Activated naive CD8-positive, alpha-beta T cell treated with anti-CD3 and anti-CD28 coated beads, Interleukin-2, amount 10 ng/mL, durations not matched to agents 7 days and 5 days (primary cell): ENCODE measurements at regions of chr2 and their contacts with region 1.

Region 1: GRCh38 chr2:101328474-101329007 is 20.0 kb upstream of the RNF149 start:
- DNase-seq: no peak
- ATAC-seq: peak; percentile 93
- H3K4me3 Mint-ChIP-seq: no peak overlapping the region
- H3K27ac Mint-ChIP-seq: no peak overlapping the region
- H3K4me1 Mint-ChIP-seq: peaks cover 21% of the 10 kb centered on the region
- H3K27me3 Mint-ChIP-seq: no peaks in the 10 kb centered on the region

Region 2: DNA sequence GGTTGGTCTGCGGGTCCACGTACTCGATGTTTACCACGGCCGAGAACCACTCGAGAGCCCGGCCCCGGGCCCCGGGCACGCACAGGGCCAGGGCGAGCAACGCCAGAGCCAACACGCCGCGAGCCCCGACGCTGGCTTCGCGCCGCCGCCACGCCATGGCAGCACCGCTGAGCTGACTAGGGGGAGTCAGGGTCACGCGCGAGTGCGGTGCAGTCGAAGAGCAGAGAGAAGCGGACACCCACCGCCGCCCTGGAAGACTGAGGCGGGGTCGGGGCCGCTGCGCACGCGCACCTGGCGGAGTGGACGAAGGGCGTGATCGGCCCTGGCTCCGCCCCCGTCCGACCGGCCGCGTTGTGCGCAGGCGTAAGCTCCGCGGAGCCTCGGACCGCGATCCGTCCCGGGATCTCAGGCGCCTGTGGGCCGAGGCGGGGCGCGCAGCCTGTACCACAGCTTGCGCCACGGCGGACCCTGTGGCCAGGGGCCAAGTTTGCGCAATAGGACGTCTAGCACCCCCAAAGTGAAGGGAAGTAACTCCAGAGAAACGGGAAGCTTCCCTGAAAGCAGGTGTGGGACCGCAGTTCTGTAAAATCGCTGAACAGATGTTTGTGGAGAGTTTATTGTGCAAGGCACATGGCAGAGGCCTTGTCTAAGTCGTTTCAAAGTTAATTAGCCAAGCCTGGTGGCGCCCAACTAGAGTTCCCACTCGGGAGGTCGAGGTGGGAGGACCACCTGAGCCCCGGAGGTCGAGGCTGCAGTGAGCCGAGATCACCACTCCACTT is 19.9 kb before region 1 on chr2 and contains the start of gene RNF149:
- POLR2A ChIA-PET with region 1: interaction called, 32 read pairs
- DNase-seq: peak; percentile 97
- ATAC-seq: peak; percentile 78
- H3K4me3 Mint-ChIP-seq: peak within 1 kb of the TSS; percentile 98
- H3K27ac Mint-ChIP-seq: peak within 1 kb of the TSS; percentile 96
- H3K4me1 Mint-ChIP-seq: peaks cover 50% of the 10 kb centered on the region
- H3K27me3 Mint-ChIP-seq: no peaks in the 10 kb centered on the region
- total RNA-seq, gene RNF149: 90.1 to 90.3 TPM

Region 3: GRCh38 chr2:101341901-101342624 is 13.5 kb after region 1 on chr2:
- POLR2A ChIA-PET with region 1: interaction called, 29 read pairs
- DNase-seq: peak; percentile 77
- ATAC-seq: peak; percentile 53
- H3K4me3 Mint-ChIP-seq: no peak overlapping the region
- H3K27ac Mint-ChIP-seq: no peak overlapping the region
- H3K4me1 Mint-ChIP-seq: peaks cover 25% of the 10 kb centered on the region
- H3K27me3 Mint-ChIP-seq: peaks cover 3% of the 10 kb centered on the region